ENCODE measurements at regions of chr6 and their contacts with region 1.

Region 1: GRCh38 chr6:3251462-3252314 is 7.1 kb upstream of the PSMG4 start:
- DNase-seq: peak; percentile 69 to 75
- ATAC-seq: peak; percentile 81 to 91
- H3K4me3 ChIP-seq: no peak overlapping the region
- H3K27ac ChIP-seq: peak overlapping the region; percentile 45 to 51; a peak in 3 of 6 replicates
- H3K4me1 ChIP-seq: peaks cover 6% of the 10 kb centered on the region; the same call in 1 of the 3 replicates
- CTCF ChIP-seq: peak; percentile 78
- EP300 ChIP-seq: no peak
- POLR2A ChIP-seq: no peak
- RAD21 ChIP-seq: peak; percentile 69 to 80

Region 2: GRCh38 chr6:3125815-3126214 is 125.9 kb before region 1 on chr6:
- CTCF ChIA-PET with region 1: interaction called, 54 read pairs
- POLR2A ChIA-PET with region 1: no interaction called
- DNase-seq: no peak
- ATAC-seq: no peak; a peak in 1 of 6 replicates
- H3K4me3 ChIP-seq: no peak overlapping the region
- H3K27ac ChIP-seq: no peak overlapping the region
- H3K4me1 ChIP-seq: no peaks in the 10 kb centered on the region
- CTCF ChIP-seq: no peak
- EP300 ChIP-seq: no peak
- POLR2A ChIP-seq: no peak
- RAD21 ChIP-seq: no peak

Region 3: GRCh38 chr6:3147914-3148757 is 103.6 kb before region 1 on chr6:
- CTCF ChIA-PET with region 1: interaction called, 22 read pairs
- POLR2A ChIA-PET with region 1: no interaction called
- DNase-seq: no peak
- ATAC-seq: peak in 1 of 2 experiments; percentile 41; a peak in 2 of 6 replicates
- H3K4me3 ChIP-seq: no peak overlapping the region
- H3K27ac ChIP-seq: no peak overlapping the region
- H3K4me1 ChIP-seq: no peaks in the 10 kb centered on the region
- CTCF ChIP-seq: no peak
- EP300 ChIP-seq: no peak
- POLR2A ChIP-seq: no peak
- RAD21 ChIP-seq: no peak

Region 4: GRCh38 chr6:3162565-3163247 is 89.0 kb before region 1 on chr6:
- CTCF ChIA-PET with region 1: interaction called, 11 read pairs
- POLR2A ChIA-PET with region 1: interaction called, 9 read pairs
- DNase-seq: peak; percentile 55 to 77
- ATAC-seq: peak; percentile 88 to 90
- H3K4me3 ChIP-seq: peak overlapping the region; percentile 65
- H3K27ac ChIP-seq: peak overlapping the region; percentile 95 to 100
- H3K4me1 ChIP-seq: peaks cover 37% of the 10 kb centered on the region
- CTCF ChIP-seq: no peak
- EP300 ChIP-seq: no peak
- POLR2A ChIP-seq: peak; percentile 50
- RAD21 ChIP-seq: no peak

Region 5: GRCh38 chr6:3209114-3210023 is 42.3 kb before region 1 on chr6:
- CTCF ChIA-PET with region 1: interaction called, 12 read pairs
- POLR2A ChIA-PET with region 1: no interaction called
- DNase-seq: peak; percentile 84 to 94
- ATAC-seq: peak; percentile 98
- H3K4me3 ChIP-seq: peak overlapping the region; percentile 16; the same call in 1 of the 3 replicates
- H3K27ac ChIP-seq: peak overlapping the region; percentile 75 to 84
- H3K4me1 ChIP-seq: peaks cover 16% of the 10 kb centered on the region
- CTCF ChIP-seq: peak; percentile 34
- EP300 ChIP-seq: no peak
- POLR2A ChIP-seq: no peak
- RAD21 ChIP-seq: peak; percentile 57 to 63

Region 6: DNA sequence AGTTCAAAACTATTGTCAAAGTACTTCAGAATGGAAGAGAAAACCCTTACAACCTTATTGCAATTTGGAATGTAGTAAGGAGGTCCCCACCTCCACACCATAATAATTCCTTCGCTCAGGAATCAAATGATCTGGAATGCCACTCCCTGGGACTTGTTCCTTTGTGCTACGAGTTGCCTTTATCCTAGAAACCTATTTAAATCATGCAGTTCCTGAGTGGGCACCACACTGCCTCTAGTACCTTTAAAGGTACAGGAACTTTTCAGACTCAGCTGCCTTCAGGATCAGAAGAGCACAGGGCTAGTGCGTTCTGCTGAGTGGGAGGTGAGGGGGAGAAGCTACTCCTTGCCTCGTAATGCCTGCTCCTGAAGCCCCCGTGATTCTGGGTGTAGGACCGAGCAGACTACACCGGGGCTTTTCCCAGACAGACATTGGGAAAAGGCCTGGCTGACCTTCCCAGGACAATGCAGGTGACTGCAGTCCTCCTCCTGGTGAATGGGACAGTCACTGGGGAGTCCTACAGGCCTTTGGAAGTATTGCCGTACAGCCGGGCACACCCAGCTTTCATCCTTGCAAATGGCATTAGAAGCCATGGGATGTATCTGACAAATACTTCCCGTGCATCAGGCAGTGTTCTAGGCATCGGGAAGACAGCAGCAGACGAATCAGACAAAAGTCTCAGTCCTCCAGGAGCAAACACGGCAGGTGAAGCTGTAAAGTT is 12.4 kb before region 1 on chr6:
- CTCF ChIA-PET with region 1: interaction called, 50 read pairs
- POLR2A ChIA-PET with region 1: no interaction called
- DNase-seq: peak; percentile 44 to 63
- ATAC-seq: peak; percentile 95 to 96
- H3K4me3 ChIP-seq: no peak overlapping the region
- H3K27ac ChIP-seq: no peak overlapping the region
- H3K4me1 ChIP-seq: no peaks in the 10 kb centered on the region
- CTCF ChIP-seq: no peak
- EP300 ChIP-seq: no peak
- POLR2A ChIP-seq: no peak
- RAD21 ChIP-seq: no peak; a peak in 1 of 5 replicates

Measured in A549 (cell line).